ENCODE measurements at regions of chr12 and their contacts with region 1.

Region 1: DNA sequence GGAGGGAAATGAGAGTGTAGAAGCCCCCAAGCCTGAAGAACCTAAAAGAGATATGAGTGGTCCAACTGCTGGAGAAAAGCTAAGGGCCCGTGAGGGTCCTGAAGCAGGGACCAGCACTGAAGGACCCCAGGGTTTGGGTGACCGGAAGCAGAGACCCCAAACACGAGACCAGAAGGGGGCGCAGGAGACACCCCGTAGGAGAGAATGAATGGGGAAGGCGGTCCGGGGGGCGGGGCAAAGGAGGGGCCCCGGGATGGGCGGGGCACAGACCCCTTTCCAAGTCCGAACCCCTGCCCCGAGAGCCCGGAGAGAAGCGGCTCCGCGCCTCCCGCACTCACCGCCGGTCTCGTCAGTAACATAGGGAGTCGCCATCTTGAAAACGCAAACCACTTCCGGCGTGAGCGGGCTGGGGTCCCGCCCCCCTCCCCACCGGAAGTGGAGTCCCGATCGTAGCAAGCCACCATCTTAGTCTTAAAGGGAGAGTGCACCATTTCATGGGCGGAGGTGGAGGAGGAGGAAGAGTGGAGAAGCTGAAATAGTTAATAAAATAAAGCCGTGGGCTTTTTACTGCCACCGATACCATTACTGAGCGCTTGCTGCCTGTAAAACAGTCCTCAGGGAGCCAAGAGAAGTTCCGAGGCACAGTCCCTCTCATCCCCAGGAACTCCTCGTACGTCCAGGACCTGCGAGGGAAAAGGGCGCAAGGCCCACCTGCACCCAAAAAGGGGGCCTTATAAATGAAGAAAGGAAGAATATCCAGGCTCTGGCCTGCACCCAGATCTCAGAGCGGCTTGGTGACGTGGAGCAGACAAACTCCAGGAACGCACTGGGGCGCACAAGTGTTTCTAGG is 731 bp downstream of the PYM1 start:
- DNase-seq: peak; percentile 97
- ATAC-seq: peak; percentile 48
- H3K4me3 Mint-ChIP-seq: peak overlapping the region; percentile 96
- H3K27ac Mint-ChIP-seq: peak overlapping the region; percentile 98
- H3K4me1 Mint-ChIP-seq: peaks cover 44% of the 10 kb centered on the region
- H3K27me3 Mint-ChIP-seq: no peaks in the 10 kb centered on the region

Region 2: GRCh38 chr12:55780685-55781084 is 146.3 kb before region 1 on chr12:
- CTCF ChIA-PET with region 1: no interaction called
- DNase-seq: no peak
- ATAC-seq: no peak
- H3K4me3 Mint-ChIP-seq: no peak overlapping the region
- H3K27ac Mint-ChIP-seq: no peak overlapping the region
- H3K4me1 Mint-ChIP-seq: peaks cover 13% of the 10 kb centered on the region
- H3K27me3 Mint-ChIP-seq: no peaks in the 10 kb centered on the region

Region 3: DNA sequence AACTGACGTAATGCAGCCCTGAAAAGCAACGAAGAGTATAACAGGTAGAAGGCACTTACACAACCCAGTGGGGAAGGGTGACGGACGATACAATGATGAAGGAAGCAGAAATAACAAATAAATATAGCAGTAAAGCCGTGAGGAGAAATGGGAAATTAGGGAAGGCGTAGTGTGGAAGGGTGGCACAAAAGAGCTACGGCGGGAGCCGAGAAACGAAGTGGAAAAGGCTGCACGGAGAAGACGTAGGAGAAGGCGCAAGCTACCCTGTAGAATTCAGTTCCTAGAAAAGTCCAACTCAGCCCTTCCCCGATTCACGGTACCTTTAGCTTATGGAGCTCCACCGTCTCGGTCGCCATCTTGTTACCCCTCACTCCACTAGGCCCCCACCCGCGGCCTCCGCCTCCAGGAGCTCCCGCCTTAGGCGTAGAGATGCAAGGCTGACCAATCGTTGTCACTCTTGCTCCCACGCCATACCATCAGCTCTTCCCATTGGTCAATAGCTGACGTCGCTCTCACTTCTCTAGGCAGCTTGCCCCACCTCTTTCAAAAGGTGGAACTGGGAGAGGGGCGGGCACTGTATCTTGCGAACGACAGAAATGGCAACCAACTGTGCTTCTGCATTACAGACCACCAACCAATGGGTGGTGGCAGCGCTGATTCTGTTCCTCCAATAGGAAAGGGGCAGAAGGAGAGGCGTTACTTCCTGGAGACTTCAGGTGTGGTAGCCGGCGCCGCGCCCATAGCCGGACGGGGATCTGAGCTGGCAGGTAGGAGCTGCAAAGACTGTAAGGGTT is 109.4 kb before region 1 on chr12 and contains the starts of genes ORMDL2 and SARNP:
- CTCF ChIA-PET with region 1: interaction called, 17 read pairs
- DNase-seq: peak; percentile 100
- ATAC-seq: peak; percentile 96
- H3K4me3 Mint-ChIP-seq: no peak within 1 kb of the TSS
- H3K27ac Mint-ChIP-seq: no peak within 1 kb of the TSS
- H3K4me1 Mint-ChIP-seq: peaks cover 41% of the 10 kb centered on the region
- H3K27me3 Mint-ChIP-seq: no peaks in the 10 kb centered on the region
- total RNA-seq, gene ORMDL2: 45.8 to 57.2 TPM
- total RNA-seq, gene SARNP: 96.8 to 98.6 TPM

Region 4: GRCh38 chr12:55829967-55830600 is 96.9 kb before region 1 on chr12:
- CTCF ChIA-PET with region 1: interaction called, 25 read pairs
- DNase-seq: peak; percentile 67
- ATAC-seq: peak; percentile 24
- H3K4me3 Mint-ChIP-seq: peak overlapping the region; percentile 97
- H3K27ac Mint-ChIP-seq: peak overlapping the region; percentile 93
- H3K4me1 Mint-ChIP-seq: peaks cover 44% of the 10 kb centered on the region
- H3K27me3 Mint-ChIP-seq: no peaks in the 10 kb centered on the region

Region 5: DNA sequence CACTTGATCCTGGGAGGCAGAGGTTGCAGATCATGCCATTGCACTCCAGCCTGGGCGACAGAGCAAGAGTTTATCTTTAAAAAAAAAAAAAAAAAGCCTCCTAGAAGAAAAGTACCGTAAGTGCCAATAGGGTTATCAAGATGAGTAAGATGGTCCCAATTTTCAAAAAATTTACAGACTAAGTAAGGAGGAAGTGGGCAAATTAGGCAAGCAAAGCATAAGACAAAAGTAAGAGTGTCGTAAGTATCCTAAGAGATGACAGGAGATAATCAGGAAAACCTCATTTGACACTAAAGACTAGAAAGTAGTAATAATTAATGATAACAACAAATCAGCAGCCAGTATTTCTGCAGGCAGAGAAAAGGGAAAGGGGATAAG is 11.5 kb before region 1 on chr12:
- CTCF ChIA-PET with region 1: interaction called, 10 read pairs
- DNase-seq: no peak
- ATAC-seq: no peak
- H3K4me3 Mint-ChIP-seq: no peak overlapping the region
- H3K27ac Mint-ChIP-seq: no peak overlapping the region
- H3K4me1 Mint-ChIP-seq: peaks cover 30% of the 10 kb centered on the region
- H3K27me3 Mint-ChIP-seq: no peaks in the 10 kb centered on the region

Region 6: DNA sequence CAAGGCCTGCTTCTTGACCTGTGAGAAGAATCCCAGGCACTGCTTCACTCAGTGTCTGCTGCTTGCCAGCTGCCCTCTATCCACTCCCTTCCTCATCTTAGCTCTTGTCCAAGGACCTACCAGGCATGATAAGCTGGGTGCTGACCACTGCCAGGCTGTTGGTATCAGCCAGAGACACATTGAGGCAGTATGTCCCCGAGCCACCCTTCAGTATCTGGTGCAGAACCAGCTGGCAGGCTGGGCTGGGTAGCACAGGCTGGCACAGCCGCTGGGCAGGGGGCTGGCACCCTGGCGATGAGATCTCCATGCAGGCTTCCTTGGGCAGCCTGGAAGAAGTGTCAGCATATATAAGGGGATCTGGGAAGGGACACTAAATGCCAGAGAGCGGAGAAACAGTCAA is 28.4 kb after region 1 on chr12:
- CTCF ChIA-PET with region 1: no interaction called
- DNase-seq: no peak
- ATAC-seq: no peak
- H3K4me3 Mint-ChIP-seq: no peak overlapping the region
- H3K27ac Mint-ChIP-seq: no peak overlapping the region
- H3K4me1 Mint-ChIP-seq: no peaks in the 10 kb centered on the region
- H3K27me3 Mint-ChIP-seq: no peaks in the 10 kb centered on the region

Region 7: DNA sequence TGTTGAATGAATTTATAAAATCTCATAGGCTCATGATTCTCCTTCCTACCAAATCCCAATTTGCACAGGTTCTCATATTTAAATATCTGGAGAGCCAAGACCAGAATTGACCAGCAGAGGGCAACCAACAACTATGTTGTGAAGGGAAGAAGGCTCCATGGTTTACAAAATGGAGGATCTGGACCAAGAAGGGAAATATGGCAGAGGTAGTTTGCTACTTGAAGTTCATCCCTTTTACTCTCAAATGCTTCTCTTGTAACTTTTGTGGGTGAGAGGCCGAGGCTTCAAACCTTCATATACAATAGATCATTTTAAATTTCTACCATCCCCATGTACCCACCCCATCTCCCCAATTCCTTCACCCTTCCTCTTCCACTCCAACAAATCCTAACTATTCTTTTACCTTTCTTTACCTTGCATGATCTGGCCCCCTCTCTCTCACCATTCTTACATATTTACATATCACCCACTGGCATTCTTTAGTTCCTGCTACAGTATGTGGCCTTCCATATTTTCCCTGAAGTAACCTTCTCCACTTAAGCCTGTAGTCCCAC is 266.1 kb after region 1 on chr12:
- CTCF ChIA-PET with region 1: no interaction called
- DNase-seq: peak; percentile 89
- ATAC-seq: no peak
- H3K4me3 Mint-ChIP-seq: no peak overlapping the region
- H3K27ac Mint-ChIP-seq: peak overlapping the region; percentile 67
- H3K4me1 Mint-ChIP-seq: peaks cover 27% of the 10 kb centered on the region
- H3K27me3 Mint-ChIP-seq: no peaks in the 10 kb centered on the region